ENCODE measurements at regions of chr12 and their contacts with region 1.

Region 1: DNA sequence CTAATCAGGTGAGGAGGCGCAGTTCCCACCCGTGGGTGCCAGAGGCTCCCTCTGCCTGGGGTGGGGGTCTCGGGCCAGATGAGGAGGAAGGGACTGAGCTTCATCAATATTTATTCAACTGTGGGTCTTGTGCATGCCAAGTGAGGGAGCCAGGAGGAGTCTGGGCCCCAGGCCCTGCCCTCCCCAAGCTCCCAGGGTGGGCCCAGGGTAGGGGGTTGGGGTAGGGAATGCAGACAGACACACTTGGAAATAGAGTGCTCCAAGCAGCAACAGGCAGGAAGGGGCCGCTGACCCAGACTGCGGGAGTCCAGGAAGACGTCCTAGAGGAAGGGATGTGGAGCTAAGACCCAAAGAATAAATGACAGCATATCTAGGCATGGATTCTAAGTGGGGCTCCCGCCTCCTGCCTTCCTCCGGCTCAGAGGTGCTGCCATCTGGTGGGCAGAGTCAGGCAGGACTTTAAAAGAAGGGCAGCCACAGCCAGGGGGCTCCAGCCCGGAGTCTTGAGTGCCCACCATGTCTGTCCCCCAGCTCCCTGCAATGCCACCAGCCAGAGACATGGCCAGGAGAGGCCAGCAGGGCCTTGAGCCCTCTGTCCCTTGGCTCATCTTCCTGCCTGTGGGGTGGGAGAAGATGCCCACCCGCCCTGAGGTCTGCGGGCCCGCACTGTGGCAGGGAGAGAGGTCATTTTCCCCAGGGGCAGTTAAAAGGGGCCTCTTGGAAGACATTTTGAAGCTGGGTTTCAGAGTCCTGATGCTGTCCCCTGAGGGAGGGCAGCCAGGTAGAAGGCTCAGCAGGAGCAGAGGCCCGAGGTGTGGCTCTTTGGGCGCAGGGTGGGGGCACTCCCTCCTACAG is 70.1 kb downstream of the PHETA1 start:
- DNase-seq: no peak
- H3K4me3 ChIP-seq: no peak overlapping the region
- H3K27ac ChIP-seq: no peak overlapping the region
- H3K4me1 ChIP-seq: no peaks in the 10 kb centered on the region
- H3K27me3 ChIP-seq: peaks cover 0 to 31% (median 0%) of the 10 kb centered on the region in 4 donors
- CTCF ChIP-seq: peak; percentile 50 to 73 (median 67)
- EP300 ChIP-seq: no peak
- POLR2A ChIP-seq: no peak

Region 2: GRCh38 chr12:110937104-110937641 is 361.6 kb before region 1 on chr12:
- intact Hi-C with region 1: loop called (anchors 5 kb)
- DNase-seq: no peak
- H3K4me3 ChIP-seq: no peak overlapping the region
- H3K27ac ChIP-seq: no peak overlapping the region
- H3K4me1 ChIP-seq: peaks cover 7 to 22% (median 14%) of the 10 kb centered on the region in 4 donors
- H3K27me3 ChIP-seq: peaks cover 0 to 53% (median 0%) of the 10 kb centered on the region in 4 donors
- CTCF ChIP-seq: peak; percentile 86 to 96 (median 90)
- EP300 ChIP-seq: no peak
- POLR2A ChIP-seq: no peak